Right ventricle myocardium superior (tissue), 1 donor: ENCODE measurements at regions of chr3 and their contacts with region 1.

Region 1: DNA sequence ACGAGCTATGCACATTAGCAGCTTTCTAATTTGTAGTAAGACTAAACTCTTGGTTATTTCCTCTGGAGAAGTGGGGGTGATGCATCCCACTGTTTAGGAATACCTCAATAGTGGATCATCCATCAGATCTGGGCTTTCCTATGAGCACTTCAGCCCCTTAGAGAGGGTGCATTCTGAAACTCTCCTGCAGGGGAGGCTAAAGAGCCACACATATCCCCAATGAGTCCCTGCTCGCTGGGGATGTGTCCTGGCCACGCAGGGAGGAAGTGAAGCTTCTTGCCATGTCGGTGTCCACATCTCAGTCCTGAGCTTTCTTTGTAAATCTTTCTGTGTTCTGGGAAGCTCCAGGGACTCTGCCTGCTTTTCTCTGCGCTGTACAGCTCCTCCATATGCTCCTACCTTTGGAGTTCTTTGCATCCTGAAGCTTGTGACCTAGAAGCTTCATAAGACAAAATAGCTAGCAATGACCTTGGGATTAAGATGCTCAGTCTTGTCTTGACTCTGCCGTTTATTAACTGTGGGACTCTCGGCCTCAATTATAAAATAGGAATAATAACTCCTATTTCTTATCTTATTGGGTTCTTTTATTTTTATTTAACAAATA is 28.3 kb upstream of the MASP1 start:
- DNase-seq: peak; percentile 64
- ATAC-seq: peak; percentile 96

Region 2: DNA sequence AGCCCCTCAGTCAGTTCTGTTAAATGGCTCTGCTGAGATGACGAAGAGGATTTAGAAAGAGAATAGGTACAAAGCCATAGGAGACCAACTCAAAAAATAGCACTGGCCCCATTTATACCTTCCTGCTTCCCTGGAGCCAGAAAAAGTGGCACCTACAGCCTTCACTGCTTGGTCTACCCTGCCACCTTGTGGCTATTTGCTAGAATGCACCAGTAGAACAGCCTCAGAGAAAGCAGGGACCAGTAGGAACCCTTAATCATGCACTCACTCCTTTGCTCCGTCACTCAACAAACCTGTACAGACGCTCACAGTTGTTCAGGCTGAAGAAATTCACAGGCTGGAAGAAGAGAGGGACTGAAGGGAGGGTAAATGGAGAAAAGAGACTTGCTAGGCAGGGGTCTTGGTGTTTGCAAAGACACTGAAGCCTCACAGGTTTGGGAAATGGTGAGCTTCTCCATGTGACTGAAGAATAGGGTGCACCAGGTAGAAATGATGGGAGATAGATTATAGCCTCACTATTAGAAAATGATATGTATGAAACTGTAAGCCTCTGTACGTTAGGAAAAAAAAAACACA is 394.7 kb after region 1 on chr3:
- intact Hi-C with region 1: loop called (anchors 10 kb)
- DNase-seq: no peak
- ATAC-seq: peak; percentile 90